ENCODE measurements at regions of chr6 and their contacts with region 1.

Region 1: GRCh38 chr6:134097114-134097707 is 44.8 kb upstream of the SLC2A12 start:
- DNase-seq: peak; percentile 65
- H3K4me3 ChIP-seq: no peak overlapping the region
- H3K27ac ChIP-seq: no peak overlapping the region
- H3K4me1 ChIP-seq: no peaks in the 10 kb centered on the region
- H3K27me3 ChIP-seq: peaks cover 21 to 27% of the 10 kb centered on the region in 2 experiments
- CTCF ChIP-seq: peak; percentile 41 to 46
- POLR2A ChIP-seq: no peak

Region 2: DNA sequence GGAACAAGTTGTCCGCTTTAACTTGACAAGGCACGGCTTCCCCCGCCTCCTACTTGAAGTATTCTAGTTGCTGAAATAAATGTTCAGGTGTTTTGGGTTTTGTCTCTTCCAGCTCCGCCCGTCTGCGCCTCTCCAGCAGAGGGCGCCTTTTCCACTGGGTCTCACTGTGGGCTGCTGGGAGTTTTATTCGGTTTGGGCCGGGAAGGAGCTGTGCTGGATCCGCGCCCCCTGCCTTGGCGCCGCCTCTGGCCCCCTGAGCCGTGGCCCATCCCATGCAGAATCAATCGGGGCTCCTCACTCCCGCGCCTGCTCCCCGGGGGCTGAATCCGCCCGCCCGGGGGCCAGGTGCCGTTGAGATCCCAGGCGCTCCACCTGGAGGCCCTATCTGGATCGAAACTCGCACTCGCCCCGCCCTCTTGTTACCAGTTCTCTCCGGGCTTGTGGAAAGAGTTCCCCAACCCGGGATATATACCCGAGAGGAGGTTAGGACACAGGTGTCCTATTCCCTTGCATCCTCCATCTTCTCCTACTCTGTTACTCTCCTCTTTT is 259.3 kb before region 1 on chr6:
- CTCF ChIA-PET with region 1: interaction called, 68 read pairs
- POLR2A ChIA-PET with region 1: no interaction called
- dilution Hi-C with region 1: no loop called
- intact Hi-C with region 1: loop called (anchors 2 kb)
- DNase-seq: peak; percentile 34
- H3K4me3 ChIP-seq: peak overlapping the region; percentile 7 to 24 (median 19)
- H3K27ac ChIP-seq: no peak overlapping the region
- H3K4me1 ChIP-seq: peaks cover 2% of the 10 kb centered on the region
- H3K27me3 ChIP-seq: peaks cover 2 to 5% of the 10 kb centered on the region in 2 experiments
- CTCF ChIP-seq: peak; percentile 78 to 87
- POLR2A ChIP-seq: no peak

Region 3: DNA sequence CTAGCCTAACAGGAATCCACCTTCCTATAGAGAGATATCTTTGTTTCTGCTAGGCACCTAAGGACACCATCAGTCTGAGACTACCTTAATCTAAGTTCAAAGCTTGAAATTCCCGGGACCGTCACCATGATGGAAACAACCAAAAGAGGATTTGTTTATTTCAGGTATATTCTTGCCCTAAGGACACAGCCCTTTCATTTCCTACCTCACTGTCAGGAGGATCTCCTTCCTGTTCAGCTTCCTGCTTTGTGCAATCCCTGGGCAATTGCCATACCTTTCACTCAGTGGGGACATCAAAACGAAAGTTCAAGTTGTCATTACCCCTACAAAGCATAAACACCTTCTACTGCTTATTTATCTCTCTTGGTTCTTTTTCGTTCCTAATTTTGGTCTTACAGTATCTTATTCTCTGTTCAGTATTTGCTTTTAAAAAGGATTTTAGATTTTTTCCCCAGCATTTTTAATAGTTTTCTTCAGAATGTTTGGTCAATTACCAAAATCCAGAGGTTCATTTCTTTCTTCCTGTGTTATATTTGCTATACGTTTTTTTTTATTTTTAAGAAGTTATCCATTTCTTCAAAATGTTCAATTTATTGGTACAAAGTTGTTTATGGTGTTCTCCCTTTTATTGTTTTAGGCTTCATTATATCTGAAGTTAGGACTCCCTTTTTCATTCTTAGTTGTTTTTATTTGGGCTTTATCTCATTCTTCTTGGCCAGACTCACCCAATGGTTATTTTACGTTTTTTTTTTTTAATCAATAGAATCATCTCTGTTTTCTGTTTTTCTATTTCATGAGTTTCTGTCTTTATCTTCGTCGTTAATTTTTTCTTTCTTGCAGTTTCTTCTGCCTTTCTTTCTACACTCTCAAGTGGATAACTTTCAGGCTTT is 157.2 kb before region 1 on chr6:
- CTCF ChIA-PET with region 1: interaction called, 19 read pairs
- POLR2A ChIA-PET with region 1: no interaction called
- dilution Hi-C with region 1: no loop called
- intact Hi-C with region 1: no loop called
- DNase-seq: no peak
- H3K4me3 ChIP-seq: no peak overlapping the region
- H3K27ac ChIP-seq: no peak overlapping the region
- H3K4me1 ChIP-seq: no peaks in the 10 kb centered on the region
- H3K27me3 ChIP-seq: peaks cover 7 to 16% of the 10 kb centered on the region in 2 experiments
- CTCF ChIP-seq: no peak
- POLR2A ChIP-seq: no peak

Region 4: GRCh38 chr6:133966654-133967329 is 130.4 kb before region 1 on chr6:
- CTCF ChIA-PET with region 1: interaction called, 22 read pairs
- POLR2A ChIA-PET with region 1: no interaction called
- dilution Hi-C with region 1: no loop called
- intact Hi-C with region 1: no loop called
- DNase-seq: no peak
- H3K4me3 ChIP-seq: no peak overlapping the region
- H3K27ac ChIP-seq: no peak overlapping the region
- H3K4me1 ChIP-seq: peaks cover 6% of the 10 kb centered on the region
- H3K27me3 ChIP-seq: no peaks in the 10 kb centered on the region
- CTCF ChIP-seq: no peak
- POLR2A ChIP-seq: no peak

Region 5: GRCh38 chr6:134058622-134059366 is 38.4 kb before region 1 on chr6:
- CTCF ChIA-PET with region 1: interaction called, 80 read pairs
- POLR2A ChIA-PET with region 1: no interaction called
- dilution Hi-C with region 1: no loop called
- intact Hi-C with region 1: no loop called
- DNase-seq: no peak
- H3K4me3 ChIP-seq: no peak overlapping the region
- H3K27ac ChIP-seq: no peak overlapping the region
- H3K4me1 ChIP-seq: peaks cover 10% of the 10 kb centered on the region
- H3K27me3 ChIP-seq: no peaks in the 10 kb centered on the region
- CTCF ChIP-seq: no peak
- POLR2A ChIP-seq: no peak

Region 6: DNA sequence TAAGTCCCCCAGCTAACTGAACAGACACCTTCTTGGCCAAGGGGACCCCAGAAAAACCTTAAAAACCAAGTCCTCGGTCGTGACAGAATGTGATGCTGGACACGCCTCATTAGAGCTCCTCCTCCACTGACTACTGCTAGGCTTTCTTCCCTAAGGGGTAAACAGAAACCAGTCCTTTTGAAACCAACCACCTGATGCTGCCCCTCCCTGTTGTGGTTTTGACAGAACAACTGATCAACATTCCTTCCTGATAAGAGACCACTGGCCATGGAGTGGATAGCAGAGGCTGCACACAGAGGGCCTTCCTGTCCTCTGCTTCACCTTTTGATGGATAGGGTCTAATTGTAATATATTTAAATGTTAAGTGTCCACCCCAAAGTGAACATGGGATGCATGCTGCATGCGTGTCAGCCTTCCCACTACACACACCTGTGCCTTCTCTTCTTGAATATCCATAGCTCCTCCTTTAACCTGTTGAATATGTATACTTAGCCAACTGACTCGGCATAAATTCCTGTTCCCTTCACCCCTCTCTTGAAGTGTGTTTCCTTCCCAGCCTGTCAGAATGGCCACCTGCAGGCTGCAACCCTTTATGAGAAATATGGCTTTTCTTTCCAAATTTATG is 16.9 kb before region 1 on chr6:
- CTCF ChIA-PET with region 1: interaction called, 31 read pairs
- POLR2A ChIA-PET with region 1: no interaction called
- dilution Hi-C with region 1: no loop called
- intact Hi-C with region 1: no loop called
- DNase-seq: no peak
- H3K4me3 ChIP-seq: no peak overlapping the region
- H3K27ac ChIP-seq: no peak overlapping the region
- H3K4me1 ChIP-seq: peaks cover 10% of the 10 kb centered on the region
- H3K27me3 ChIP-seq: peaks cover 3 to 14% of the 10 kb centered on the region in 2 experiments
- CTCF ChIP-seq: no peak
- POLR2A ChIP-seq: no peak